ENCODE measurements at regions of chr11 and their contacts with region 1.

Region 1: DNA sequence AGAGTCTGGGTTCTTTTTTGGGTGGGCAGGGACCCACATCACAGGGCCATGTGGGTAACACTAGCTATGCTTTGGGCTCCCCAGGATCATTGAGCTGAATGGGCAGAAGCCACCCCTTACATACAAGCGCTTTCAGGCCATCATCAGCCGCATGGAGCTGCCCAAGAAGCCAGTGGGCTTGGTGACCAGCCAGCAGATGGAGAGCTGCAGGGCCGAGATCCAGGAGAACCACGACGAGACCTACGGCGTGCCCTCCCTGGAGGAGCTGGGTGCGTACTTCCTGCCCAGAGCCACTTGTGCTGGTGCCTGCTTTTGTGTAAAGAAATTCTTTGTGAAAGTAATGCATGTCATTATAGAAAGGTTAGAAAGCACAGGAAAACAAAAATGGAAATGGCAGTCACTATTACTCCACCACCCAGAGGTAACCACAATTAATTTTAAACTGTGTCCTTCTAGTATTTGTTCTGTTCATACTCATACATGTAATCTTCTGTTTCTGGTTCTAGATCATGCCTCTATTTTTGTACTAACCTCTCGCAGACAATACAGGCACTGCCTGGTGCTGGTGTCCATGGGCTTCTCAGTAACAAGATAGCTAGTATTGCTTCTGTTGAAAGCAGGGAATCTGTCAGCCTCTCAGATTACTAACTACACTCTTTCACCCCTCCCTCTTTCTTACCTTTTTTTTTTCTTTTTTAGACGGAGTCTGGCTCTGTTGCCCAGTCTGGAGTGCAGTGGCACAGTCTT is 13.7 kb downstream of the CRY2 start:
- DNase-seq: no peak
- H3K4me3 ChIP-seq: no peak overlapping the region
- H3K27ac ChIP-seq: no peak overlapping the region
- H3K4me1 ChIP-seq: no peaks in the 10 kb centered on the region
- H3K27me3 ChIP-seq: no peaks in the 10 kb centered on the region

Region 2: DNA sequence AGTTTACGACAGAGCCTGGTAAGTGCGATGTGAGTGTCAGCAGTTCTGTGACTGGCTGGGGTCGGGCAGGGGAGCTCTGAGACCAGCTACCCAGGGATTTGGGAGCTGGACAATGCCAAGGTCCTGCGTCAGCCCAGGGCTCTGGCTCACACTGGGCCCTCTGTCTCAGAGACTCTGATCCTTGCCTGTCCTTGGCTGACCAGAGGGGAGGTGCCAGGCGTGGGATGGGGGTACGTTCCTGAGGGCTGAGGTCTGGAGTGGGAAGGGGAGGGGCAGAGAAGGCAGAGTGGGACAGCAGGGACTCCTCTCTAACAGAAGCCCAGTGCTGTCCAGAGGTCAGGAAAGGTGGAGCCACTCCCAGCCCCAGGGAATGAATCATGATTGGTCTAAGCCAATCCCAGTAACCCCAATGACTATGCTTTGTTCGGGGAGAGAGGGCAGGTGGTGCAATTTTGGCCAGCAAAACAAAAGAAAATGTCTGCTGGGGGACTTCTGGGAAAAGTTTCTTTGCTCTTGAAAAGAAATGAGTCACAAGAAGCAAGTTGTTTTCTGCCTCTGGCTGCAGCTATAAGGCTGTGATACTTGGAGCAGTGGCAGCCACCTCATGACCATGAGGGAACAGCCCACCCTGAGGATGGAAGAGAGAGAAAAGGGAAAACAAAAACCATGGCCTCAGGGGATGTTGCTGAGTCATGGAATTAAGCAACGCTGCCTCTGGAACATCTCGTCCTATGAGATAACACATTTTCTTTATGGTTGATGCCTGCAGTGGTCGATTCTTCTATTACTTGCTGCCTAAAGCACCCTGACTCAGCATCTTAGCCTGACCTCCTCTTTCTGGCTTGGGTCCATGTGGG is 303.9 kb before region 1 on chr11:
- CTCF ChIA-PET with region 1: no interaction called
- POLR2A ChIA-PET with region 1: no interaction called
- DNase-seq: no peak
- H3K4me3 ChIP-seq: no peak overlapping the region
- H3K27ac ChIP-seq: no peak overlapping the region
- H3K4me1 ChIP-seq: no peaks in the 10 kb centered on the region
- H3K27me3 ChIP-seq: peaks cover 0 to 5% (median 0%) of the 10 kb centered on the region in 5 experiments

Region 3: GRCh38 chr11:45872513-45873356 is 11.8 kb after region 1 on chr11:
- CTCF ChIA-PET with region 1: interaction called, 22 read pairs
- POLR2A ChIA-PET with region 1: interaction called, 3 read pairs
- DNase-seq: peak; percentile 39 to 68 (median 62)
- H3K4me3 ChIP-seq: no peak overlapping the region
- H3K27ac ChIP-seq: no peak overlapping the region
- H3K4me1 ChIP-seq: peaks cover 0 to 9% (median 3%) of the 10 kb centered on the region in 4 experiments
- H3K27me3 ChIP-seq: no peaks in the 10 kb centered on the region